Sciatic nerve (tissue), 2 donors: ENCODE measurements at regions of chr7 and their contacts with region 1.

Region 1: DNA sequence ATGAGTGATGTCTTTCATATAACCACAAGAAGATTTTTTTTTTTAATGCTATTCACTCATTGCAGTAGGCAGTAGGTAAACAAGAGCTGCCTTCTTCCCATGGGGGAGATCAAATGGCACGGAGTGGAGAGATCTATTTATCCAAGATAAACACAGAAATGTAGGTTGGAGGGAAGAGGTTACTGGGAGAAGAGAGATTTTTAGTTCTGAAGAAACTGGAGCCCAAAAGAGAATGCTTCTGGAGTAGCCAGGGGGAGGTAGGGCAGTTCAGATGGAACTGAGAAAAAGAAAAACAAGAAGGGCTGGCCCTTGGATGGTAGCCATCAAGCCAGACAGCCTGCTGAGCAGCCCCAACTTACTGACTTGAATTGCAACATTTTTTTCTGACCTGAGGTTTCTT is 270.1 kb upstream of the TPK1 start:
- DNase-seq: peak; percentile 63
- ATAC-seq: peak; percentile 96

Region 2: DNA sequence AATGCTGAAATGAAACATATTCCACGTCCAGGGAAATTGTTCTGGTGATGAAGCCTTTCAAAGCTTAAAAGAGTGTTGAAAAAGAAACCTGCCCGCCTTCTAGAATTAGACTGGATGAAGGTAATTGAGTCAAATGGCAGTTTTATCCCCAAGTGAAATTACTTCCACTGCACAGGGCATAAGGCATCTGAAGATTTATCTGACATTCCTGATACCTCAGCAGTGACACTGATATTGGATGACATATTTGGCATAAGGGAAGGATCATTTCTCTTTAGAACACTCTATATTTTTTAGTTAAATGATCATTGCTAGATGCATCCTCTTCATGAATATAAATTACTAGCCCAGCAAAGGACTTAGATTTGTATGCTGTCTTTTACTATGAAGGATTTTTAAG is 40.5 kb before region 1 on chr7:
- intact Hi-C with region 1: loop called (anchors 2 kb)
- DNase-seq: no peak
- ATAC-seq: no peak

Region 3: DNA sequence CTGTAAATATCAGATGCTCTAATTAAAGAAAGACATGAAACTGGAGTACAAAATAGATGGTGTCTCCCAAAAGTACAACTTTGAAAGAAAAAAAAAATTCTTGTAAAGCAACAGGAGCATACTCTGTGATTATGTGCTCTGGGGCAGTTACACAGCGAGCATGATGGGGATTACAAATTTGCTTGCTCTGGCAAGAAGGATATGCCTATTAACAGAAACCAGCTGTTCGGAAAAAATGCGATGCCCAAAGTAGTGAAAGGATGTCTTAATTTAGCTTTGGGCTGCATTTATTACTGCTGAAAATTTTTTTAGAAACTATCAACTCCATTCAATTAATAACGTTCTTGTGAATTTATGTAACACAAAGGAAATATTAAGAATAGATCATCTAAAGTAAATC is 13.2 kb before region 1 on chr7:
- intact Hi-C with region 1: loop called (anchors 1 kb)
- DNase-seq: no peak
- ATAC-seq: no peak